ENCODE measurements at regions of chr12 and their contacts with region 1.

Region 1: GRCh38 chr12:110280779-110281548 is at the start of gene ATP2A2:
- DNase-seq: peak; percentile 92 to 97 (median 97)
- ATAC-seq: peak; percentile 92 to 95
- H3K4me3 ChIP-seq: peak within 1 kb of the TSS; percentile 96
- H3K27ac ChIP-seq: peak within 1 kb of the TSS; percentile 87
- H3K4me1 ChIP-seq: peaks cover 1% of the 10 kb centered on the region
- H3K27me3 ChIP-seq: no peaks in the 10 kb centered on the region
- total RNA-seq, gene ATP2A2: 2,744 to 3,920 (median 3,065) TPM

Region 2: DNA sequence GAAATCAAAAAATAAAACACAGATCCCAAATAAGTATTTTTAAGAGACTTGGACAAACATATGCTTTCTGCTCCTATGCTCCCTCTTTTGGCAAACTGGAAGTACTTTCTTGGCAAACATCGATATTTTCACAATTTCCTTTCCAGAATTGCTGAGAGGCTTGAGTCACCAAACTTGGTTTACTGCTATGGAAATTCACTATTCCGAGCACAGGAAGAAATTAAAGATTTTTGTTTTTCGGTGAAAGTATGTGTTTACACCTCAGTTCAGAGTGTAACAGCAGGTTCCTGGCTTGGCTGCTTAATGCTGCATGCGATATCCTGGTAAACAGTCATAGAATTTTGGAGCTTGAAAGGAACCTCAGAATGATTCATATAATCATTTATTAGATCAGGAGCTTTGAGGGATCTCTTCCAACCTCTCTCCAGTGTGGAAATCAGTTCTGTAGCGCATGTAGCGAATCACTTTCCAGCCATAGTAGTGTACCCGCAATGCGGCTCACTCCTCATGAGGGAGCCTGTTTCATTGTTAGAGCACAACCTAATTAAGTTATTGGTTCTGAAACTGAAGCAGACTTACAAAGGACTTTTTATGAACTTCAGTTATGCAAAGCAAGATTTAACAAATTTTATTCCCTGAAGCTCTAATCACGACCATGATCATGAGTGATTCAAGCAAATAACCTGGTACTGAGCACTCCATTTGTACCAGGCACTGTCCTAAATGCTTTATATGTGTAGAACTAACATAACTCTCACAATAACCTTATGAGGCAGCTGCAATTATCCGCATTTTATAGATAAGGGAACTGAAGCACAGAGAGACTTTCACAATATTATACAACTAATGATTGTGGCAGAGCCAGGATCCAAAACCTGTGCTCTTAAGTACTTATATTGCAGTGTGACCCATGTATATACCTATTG is 56.3 kb before region 1 on chr12:
- intact Hi-C with region 1: loop called in 3 of 4 experiments (anchors 10 kb)
- DNase-seq: no peak
- ATAC-seq: peak; percentile 78 to 82
- H3K4me3 ChIP-seq: peak overlapping the region; percentile 26
- H3K27ac ChIP-seq: peak overlapping the region; percentile 64
- H3K4me1 ChIP-seq: peaks cover 2% of the 10 kb centered on the region
- H3K27me3 ChIP-seq: no peaks in the 10 kb centered on the region

Region 3: DNA sequence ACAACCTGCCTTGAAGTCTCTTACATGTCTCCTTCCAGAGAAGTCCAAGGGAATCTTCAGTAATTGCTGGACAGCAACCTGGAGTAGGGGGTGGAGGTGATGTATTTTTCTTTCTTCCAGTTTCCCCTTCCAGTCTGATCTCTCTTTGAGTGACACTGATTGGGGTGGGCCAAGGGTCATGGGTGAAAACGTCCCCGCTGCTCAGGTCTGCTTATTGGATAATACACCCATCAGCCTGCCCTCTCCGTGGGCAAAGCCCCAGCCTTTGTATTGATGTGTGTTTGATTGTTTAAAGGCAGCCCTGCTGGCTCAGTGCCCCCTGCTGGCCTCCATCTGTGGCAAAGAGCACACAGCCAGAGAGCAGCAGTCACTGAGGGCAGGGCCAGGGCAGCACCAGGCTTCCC is 35.6 kb before region 1 on chr12:
- intact Hi-C with region 1: loop called in 1 of 4 experiments (anchors 5 kb)
- DNase-seq: peak; percentile 39 to 79 (median 69)
- ATAC-seq: no peak
- H3K4me3 ChIP-seq: no peak overlapping the region
- H3K27ac ChIP-seq: peak overlapping the region; percentile 91
- H3K4me1 ChIP-seq: peaks cover 15% of the 10 kb centered on the region
- H3K27me3 ChIP-seq: no peaks in the 10 kb centered on the region

Measured in right cardiac atrium (tissue), 5 donors.